ENCODE measurements at regions of chr20 and their contacts with region 1.

Region 1: GRCh38 chr20:45337367-45338120 is 10.7 kb downstream of the SDC4 start:
- DNase-seq: peak; percentile 81
- H3K4me3 ChIP-seq: no peak overlapping the region
- H3K27ac ChIP-seq: peak overlapping the region; percentile 96
- H3K4me1 ChIP-seq: peaks cover 71% of the 10 kb centered on the region
- H3K27me3 ChIP-seq: no peaks in the 10 kb centered on the region
- CTCF ChIP-seq: no peak

Region 2: DNA sequence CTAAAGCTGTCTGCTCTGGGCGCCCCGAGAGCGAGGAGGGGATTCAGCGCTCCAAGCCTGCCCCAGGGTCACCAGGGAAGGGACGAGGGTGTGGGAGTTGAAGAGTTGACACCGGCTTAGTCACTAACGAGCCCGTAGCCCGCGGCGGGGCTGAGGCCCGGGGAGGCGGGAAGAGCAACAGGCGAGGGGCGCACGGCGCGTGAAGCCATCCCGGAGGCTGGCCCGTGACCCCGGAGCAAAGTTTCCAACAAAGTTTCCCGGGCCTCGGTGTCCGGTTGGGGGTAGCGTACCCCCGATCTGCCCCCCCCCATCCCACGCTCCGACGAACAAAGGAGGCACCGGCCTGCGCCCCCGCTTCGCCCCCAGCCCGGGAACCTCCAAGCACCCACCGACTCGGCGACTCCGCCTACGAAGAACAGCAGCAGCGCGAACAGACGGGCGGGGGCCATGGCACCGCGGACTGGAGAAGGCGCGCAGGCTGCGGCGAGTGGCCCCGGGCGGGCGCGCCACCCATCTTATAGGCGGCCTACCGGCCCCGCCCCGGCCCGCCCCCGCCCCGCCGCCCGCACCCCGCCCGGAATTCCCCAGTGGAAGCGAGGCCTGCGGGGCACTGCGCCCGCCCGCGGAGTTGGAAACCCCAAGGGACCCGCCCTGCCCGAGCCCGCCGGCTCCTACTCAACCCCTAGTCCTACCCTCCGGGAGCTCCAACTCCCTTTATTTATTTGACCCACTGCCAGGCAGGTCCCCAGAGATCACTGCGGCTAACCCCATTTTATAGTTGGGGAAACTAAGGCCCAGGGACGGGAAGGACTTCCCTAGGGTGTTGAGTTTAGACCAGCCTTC is 10.6 kb after region 1 on chr20 and contains the start of gene SDC4:
- CTCF ChIA-PET with region 1: no interaction called
- dilution Hi-C with region 1: no loop called
- in situ Hi-C with region 1: no loop called
- intact Hi-C with region 1: loop called (anchors 1 kb)
- DNase-seq: peak; percentile 84
- H3K4me3 ChIP-seq: peak within 1 kb of the TSS; percentile 75 to 87 (median 82)
- H3K27ac ChIP-seq: peak within 1 kb of the TSS; percentile 96
- H3K4me1 ChIP-seq: peaks cover 34% of the 10 kb centered on the region
- H3K27me3 ChIP-seq: no peaks in the 10 kb centered on the region
- CTCF ChIP-seq: no peak
- total RNA-seq, gene SDC4: 276 to 550 TPM

Region 3: GRCh38 chr20:45672765-45673164 is 335.2 kb after region 1 on chr20:
- CTCF ChIA-PET with region 1: no interaction called
- dilution Hi-C with region 1: no loop called
- in situ Hi-C with region 1: no loop called
- intact Hi-C with region 1: no loop called
- DNase-seq: no peak
- H3K4me3 ChIP-seq: no peak overlapping the region
- H3K27ac ChIP-seq: no peak overlapping the region
- H3K4me1 ChIP-seq: no peaks in the 10 kb centered on the region
- H3K27me3 ChIP-seq: no peaks in the 10 kb centered on the region
- CTCF ChIP-seq: no peak

Measured in mammary epithelial cell (primary cell).